ENCODE measurements at regions of chr11 and their contacts with region 1.

Region 1: GRCh38 chr11:74321487-74322188 is 10.2 kb upstream of the P4HA3 start:
- DNase-seq: peak in 1 of 3 donors; percentile 30
- ATAC-seq: no peak
- H3K4me3 ChIP-seq: no peak overlapping the region
- H3K4me1 ChIP-seq: no peaks in the 10 kb centered on the region
- CTCF ChIP-seq: peak; percentile 24

Region 2: DNA sequence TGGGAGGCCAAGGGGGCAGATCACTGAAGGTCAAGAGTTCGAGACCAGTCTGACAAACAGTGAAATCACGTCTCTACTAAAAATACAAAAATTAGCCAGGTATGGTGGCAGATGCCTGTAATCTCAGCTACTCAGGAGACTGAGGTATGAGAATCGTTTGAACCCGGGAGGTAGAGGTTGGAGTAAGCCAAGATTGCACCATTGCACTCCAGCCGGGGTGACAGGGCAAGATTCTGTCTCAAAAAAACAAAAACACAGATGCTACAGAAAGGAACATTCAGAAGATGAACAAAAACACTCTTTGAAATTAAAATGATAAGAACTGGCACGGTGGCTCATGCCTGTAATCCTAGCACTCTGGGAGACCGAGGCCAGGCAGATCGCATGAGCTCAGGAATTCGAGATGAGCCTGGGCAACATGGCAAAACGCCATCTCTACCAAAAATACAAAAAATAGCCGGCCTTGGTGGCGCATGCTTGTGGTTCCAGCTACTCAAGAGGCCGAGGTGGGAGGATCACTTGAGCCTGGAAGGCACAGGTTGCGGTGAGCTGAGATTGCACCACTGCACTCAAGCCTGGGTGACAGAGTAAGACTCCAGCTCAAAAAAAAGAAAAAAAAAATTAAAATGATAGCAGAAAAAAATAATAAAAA is 569.3 kb before region 1 on chr11:
- intact Hi-C with region 1: no loop called
- DNase-seq: no peak
- ATAC-seq: no peak
- H3K4me3 ChIP-seq: no peak overlapping the region
- H3K4me1 ChIP-seq: peaks cover 20% of the 10 kb centered on the region
- CTCF ChIP-seq: no peak

Region 3: DNA sequence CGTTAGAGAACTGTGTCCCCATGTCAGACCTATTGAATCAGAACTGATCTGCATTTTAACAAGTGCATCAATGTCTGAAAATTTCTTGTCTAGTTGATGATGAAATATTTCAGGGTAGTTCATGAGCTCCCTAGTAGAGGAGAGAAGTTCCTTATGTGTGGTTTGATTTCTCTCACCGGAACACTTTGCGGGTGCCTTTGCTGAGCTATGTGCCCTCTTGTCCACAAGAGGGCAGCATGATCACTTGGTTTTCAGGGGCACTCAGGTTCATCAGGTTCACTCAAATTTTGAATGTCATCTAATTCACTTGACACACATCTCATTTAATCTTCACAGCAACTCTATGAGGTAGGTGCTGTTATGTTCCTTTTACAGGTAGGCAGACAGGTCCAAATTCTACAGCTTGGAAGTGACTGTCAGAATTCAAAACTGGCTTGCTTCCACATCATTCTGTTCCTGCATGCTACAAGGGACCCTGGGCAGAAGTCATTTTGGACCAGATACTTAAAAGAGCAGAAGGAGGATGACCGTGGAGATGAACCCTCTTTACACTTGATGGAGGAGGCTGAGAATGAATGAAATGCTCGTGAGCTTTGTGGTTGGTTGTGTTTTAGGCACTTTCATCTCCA is 65.8 kb before region 1 on chr11:
- intact Hi-C with region 1: loop called in 1 of 2 experiments (anchors 10 kb)
- DNase-seq: peak in 2 of 3 donors; percentile 48 to 61
- ATAC-seq: peak; percentile 86
- H3K4me3 ChIP-seq: no peak overlapping the region
- H3K4me1 ChIP-seq: no peaks in the 10 kb centered on the region
- CTCF ChIP-seq: peak; percentile 89